Activated CD8-positive, alpha-beta T cell treated with anti-CD3 and anti-CD28 coated beads for 36 hours (primary cell): ENCODE measurements at regions of chr6 and their contacts with region 1.

Region 1: DNA sequence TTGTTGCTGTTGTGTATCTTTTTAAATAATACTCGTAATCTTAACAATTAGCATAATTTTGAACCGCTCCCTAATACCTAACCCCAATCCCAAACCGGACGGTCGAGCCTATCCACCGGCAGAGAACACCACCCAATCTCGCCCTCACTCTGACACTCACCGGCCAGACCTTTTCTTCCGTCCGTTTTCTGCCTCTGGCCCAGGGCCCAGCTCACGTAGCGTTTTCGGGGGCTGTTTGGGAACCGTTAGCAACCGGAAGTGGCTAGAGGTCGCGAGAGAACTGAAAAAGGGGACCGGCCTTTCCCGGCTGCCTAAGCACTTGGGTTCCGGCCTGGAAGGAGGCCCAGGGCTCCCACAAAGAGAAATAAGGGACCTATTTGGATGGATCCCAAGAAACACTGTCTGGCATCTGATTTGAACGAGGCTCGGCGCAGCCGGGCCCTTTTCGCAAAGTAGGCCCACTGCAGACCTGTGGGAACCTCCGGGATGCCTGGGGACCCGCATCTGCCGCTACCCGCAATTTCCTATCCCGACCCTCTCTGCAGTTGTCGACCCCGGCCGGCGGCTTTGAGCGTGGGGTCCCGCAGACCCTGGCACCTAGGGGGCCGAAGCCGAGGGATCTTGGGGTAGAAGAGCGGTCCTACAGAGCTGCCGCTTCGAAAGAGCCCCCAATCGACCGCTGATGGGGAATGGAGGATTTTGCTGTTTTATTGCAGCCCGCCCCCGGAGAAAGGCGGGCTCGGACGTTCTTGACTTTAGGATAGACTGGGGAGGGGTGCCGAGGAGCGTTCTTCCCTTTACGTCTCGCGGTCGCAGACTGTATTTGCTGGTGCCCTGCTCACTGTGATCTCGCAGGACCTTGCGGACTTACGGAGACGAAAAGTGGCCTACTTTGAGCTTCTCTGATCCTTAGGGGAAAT is 4.8 kb upstream of the ZKSCAN8 start:
- DNase-seq: peak; percentile 83
- ATAC-seq: peak; percentile 52
- H3K4me3 Mint-ChIP-seq: peak overlapping the region; percentile 87
- H3K27ac Mint-ChIP-seq: peak overlapping the region; percentile 98
- H3K4me1 Mint-ChIP-seq: peaks cover 60% of the 10 kb centered on the region
- H3K27me3 Mint-ChIP-seq: no peaks in the 10 kb centered on the region
- CTCF ChIP-seq: no peak

Region 2: DNA sequence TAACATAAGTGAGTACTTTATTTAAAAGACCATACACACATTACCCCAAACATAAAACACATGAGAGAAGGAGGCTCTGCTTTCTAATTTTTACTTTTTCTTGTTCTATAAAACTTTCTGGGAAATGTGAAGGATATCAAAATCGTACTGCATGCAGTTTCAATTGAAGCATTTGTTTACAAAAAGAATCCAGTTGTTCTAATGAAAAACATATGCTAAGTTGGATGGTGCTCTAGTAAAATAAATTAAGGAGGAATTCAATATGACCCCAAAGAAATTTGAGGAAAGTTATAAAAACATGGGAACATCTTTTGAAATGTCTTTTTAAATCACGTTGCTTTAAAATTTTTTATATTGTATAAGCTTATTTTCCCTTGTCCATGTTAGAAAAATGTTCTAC is 142.2 kb before region 1 on chr6:
- CTCF ChIA-PET with region 1: no interaction called
- POLR2A ChIA-PET with region 1: no interaction called
- intact Hi-C with region 1: no loop called
- DNase-seq: no peak
- ATAC-seq: no peak
- H3K4me3 Mint-ChIP-seq: no peak overlapping the region
- H3K27ac Mint-ChIP-seq: no peak overlapping the region
- H3K4me1 Mint-ChIP-seq: no peaks in the 10 kb centered on the region
- H3K27me3 Mint-ChIP-seq: peaks cover 31% of the 10 kb centered on the region
- CTCF ChIP-seq: no peak

Region 3: GRCh38 chr6:28104392-28105244 is 32.2 kb before region 1 on chr6:
- CTCF ChIA-PET with region 1: interaction called, 4 read pairs
- POLR2A ChIA-PET with region 1: interaction called, 15 read pairs
- intact Hi-C with region 1: no loop called
- DNase-seq: peak; percentile 90
- ATAC-seq: peak; percentile 100
- H3K4me3 Mint-ChIP-seq: peak overlapping the region; percentile 87
- H3K27ac Mint-ChIP-seq: peak overlapping the region; percentile 92
- H3K4me1 Mint-ChIP-seq: peaks cover 5% of the 10 kb centered on the region
- H3K27me3 Mint-ChIP-seq: peaks cover 4% of the 10 kb centered on the region
- CTCF ChIP-seq: peak; percentile 58

Region 4: GRCh38 chr6:28124102-28124970 is 12.5 kb before region 1 on chr6 and contains the start of gene ZSCAN16:
- CTCF ChIA-PET with region 1: interaction called, 4 read pairs
- POLR2A ChIA-PET with region 1: interaction called, 12 read pairs
- intact Hi-C with region 1: loop called (anchors 2 kb)
- DNase-seq: peak; percentile 85
- ATAC-seq: peak; percentile 96
- H3K4me3 Mint-ChIP-seq: peak within 1 kb of the TSS; percentile 97
- H3K27ac Mint-ChIP-seq: peak within 1 kb of the TSS; percentile 94
- H3K4me1 Mint-ChIP-seq: peaks cover 51% of the 10 kb centered on the region
- H3K27me3 Mint-ChIP-seq: no peaks in the 10 kb centered on the region
- CTCF ChIP-seq: no peak
- total RNA-seq, gene ZSCAN16: 2.0 to 2.3 TPM

Region 5: DNA sequence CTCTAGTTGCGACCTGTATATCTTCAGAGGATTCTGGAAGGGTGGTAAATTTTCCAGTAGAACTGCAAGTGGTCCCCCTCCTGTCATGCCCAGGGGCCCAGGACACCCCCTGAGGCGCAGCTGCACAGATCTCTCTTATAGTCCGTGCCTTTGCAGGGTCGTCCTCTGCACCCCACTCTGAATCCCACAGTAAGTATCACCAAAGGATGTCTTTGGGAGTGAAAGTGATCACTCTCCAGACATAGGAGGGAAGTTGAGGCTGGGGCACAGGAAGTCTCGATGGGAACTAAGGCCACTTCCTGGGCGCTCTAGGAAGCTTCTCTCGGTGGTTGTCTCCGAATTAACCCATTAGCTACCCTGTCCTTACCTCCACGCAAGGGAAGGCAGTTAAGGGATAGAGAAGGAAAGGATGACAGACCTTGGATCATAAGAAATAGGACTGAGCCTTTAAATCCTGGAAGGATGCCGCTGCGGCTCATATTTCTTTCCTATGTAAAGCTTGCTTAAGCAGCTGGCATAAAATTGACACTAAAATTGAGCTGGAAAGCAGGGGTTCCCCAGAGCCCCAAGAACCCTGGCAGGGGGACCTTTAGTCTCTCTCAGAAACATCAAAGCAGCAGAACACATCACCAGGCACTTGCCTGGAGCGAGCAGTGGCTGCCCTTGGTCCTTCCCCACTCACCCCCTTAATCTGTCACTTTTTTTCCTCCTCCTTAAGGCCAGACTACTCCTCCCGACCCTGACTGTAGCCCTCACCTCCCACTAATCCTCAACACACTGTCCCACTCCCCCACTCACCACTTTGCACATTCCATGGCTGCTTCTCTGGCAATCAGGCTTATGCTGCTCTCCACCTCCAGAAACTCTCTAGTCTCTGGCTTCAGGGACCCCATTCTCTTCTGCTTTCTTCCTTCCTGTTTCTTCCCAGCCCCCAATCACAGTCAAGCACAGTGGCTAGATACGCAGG is 115.4 kb after region 1 on chr6 and contains the start of gene ZKSCAN4:
- CTCF ChIA-PET with region 1: interaction called, 11 read pairs
- POLR2A ChIA-PET with region 1: interaction called, 6 read pairs
- intact Hi-C with region 1: loop called (anchors 10 kb)
- DNase-seq: peak; percentile 88
- ATAC-seq: peak; percentile 81
- H3K4me3 Mint-ChIP-seq: peak within 1 kb of the TSS; percentile 99
- H3K27ac Mint-ChIP-seq: peak within 1 kb of the TSS; percentile 87
- H3K4me1 Mint-ChIP-seq: peaks cover 28% of the 10 kb centered on the region
- H3K27me3 Mint-ChIP-seq: no peaks in the 10 kb centered on the region
- CTCF ChIP-seq: no peak
- total RNA-seq, gene ZKSCAN4: 3.5 to 3.6 TPM